BJ (cell line): ENCODE measurements at regions of chr19 and their contacts with region 1.

Region 1: DNA sequence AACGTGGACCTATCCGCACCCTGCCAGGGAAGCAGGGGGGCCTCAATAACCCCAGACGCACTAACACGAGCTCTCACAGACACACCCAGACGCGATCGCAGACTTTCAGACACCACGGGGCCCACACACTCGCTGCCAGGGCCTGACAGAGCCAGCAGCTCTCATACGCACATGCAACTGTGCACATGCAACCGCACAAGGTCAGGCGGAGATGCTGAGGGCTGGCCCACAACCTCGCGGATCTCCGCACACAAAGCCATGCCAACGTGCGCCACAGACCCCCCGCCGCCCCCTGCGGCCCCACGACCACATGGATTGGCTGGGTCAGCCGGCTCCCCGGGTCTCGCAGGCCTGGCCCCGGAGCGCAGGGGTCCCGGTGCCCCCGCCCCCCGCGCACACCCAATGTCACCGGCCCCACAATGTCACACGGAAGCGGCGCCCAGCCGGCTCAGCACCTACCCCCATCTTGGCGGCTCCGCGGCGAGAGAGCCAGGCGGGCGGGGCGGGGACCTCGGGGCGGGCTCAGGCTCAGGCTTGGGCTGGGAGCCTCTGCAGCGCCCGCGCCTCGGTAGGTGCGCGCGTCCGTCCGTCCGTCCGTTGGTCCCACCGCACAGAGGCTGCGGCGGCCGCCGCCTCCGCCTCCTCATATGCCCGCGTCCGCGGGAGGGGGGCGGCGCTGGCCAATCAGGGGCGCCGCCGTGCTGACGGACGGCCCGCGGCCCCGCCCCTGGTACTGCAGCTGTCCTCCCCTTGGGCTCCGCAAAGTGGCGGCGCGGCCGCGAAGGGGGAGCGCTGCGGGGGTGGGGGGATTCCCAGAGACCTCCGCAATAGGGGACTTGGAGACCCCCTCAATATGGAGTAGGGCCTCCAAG is at the start of gene ATP1A3:
- DNase-seq: no peak
- H3K4me3 ChIP-seq: peak within 1 kb of the TSS; percentile 37
- H3K27me3 ChIP-seq: peaks cover 23% of the 10 kb centered on the region
- CTCF ChIP-seq: no peak
- polyA plus RNA-seq, gene ATP1A3: 0.11 and 0.32 TPM in 2 replicates

Region 2: DNA sequence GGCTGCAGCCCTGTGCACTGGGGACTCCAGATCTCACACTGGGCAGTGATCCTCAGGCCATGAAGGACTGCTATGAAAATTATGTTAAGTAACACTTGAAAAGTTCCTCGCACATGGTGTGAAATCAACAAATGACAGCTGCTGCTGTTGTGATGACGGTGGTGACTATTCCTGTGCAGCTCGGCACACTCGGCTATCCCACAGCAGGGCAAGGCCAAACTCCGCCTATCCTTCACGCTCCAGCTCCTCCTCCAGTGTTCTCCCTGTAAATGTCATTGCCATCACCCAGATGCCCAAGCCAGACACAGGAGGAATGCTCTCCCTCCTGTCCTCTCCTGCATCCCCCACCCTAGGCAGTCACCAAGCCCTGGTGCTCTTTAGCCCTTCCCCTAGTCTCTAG is 44.8 kb after region 1 on chr19:
- CTCF ChIA-PET with region 1: interaction called, 33 read pairs
- POLR2A ChIA-PET with region 1: no interaction called
- DNase-seq: no peak
- H3K4me3 ChIP-seq: no peak overlapping the region
- H3K27me3 ChIP-seq: peaks cover 3% of the 10 kb centered on the region
- CTCF ChIP-seq: no peak